Activated B cell treated with CpG ODN at 0.5 μM for 24 hours (primary cell): ENCODE measurements at regions of chr19 and their contacts with region 1.

Region 1: GRCh38 chr19:20039203-20039723 is at the start of gene ZNF682:
- DNase-seq: peak; percentile 85
- ATAC-seq: peak; percentile 100
- H3K4me3 Mint-ChIP-seq: peak within 1 kb of the TSS; percentile 98
- H3K27ac Mint-ChIP-seq: peak within 1 kb of the TSS; percentile 92
- H3K4me1 Mint-ChIP-seq: peaks cover 14% of the 10 kb centered on the region
- H3K27me3 Mint-ChIP-seq: no peaks in the 10 kb centered on the region
- CTCF ChIP-seq: no peak
- total RNA-seq, gene ZNF682: 15.5 and 19.9 TPM in 2 replicates

Region 2: GRCh38 chr19:19657397-19657783 is 381.9 kb before region 1 on chr19:
- CTCF ChIA-PET with region 1: no interaction called
- POLR2A ChIA-PET with region 1: no interaction called
- intact Hi-C with region 1: no loop called
- DNase-seq: no peak
- ATAC-seq: no peak
- H3K4me3 Mint-ChIP-seq: no peak overlapping the region
- H3K27ac Mint-ChIP-seq: no peak overlapping the region
- H3K4me1 Mint-ChIP-seq: peaks cover 19% of the 10 kb centered on the region
- H3K27me3 Mint-ChIP-seq: no peaks in the 10 kb centered on the region
- CTCF ChIP-seq: no peak

Region 3: GRCh38 chr19:19937403-19937802 is 101.9 kb before region 1 on chr19:
- CTCF ChIA-PET with region 1: no interaction called
- POLR2A ChIA-PET with region 1: no interaction called
- intact Hi-C with region 1: no loop called
- DNase-seq: no peak
- ATAC-seq: no peak
- H3K4me3 Mint-ChIP-seq: peak overlapping the region; percentile 11
- H3K27ac Mint-ChIP-seq: peak overlapping the region; percentile 46
- H3K4me1 Mint-ChIP-seq: peaks cover 18% of the 10 kb centered on the region
- H3K27me3 Mint-ChIP-seq: no peaks in the 10 kb centered on the region
- CTCF ChIP-seq: no peak

Region 4: DNA sequence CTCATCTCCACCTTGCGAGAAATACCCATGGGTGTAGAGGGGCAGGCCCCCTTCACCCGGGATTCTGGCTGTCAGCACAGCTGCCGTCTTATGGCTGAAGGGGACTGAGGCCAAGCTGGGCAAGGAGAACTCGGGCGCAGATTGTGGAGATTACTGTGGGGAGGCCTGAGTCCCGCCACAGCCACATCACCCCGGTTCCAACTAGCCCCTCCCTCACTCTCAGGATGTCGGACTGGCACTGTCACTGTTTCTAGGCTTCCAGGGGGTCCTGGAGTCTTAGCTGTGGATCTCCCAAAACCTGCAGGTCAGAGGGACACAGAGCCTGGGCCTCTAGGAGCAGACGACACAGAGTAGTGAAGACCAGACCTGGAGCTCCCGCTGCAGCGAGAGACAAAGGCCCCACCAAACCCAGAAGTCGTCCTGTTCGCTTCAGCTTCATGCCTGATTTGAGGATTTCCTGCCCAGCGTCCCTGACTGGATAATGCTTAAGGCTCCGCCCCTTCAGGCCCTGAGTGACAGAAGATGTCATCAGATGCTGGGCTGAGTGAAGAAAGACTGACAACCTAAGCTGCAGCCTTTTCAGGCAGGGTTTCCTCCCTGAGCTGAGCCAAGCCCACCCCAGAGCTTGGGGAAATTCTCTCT is 82.7 kb before region 1 on chr19:
- CTCF ChIA-PET with region 1: no interaction called
- POLR2A ChIA-PET with region 1: no interaction called
- intact Hi-C with region 1: loop called (anchors 1 kb)
- DNase-seq: no peak
- ATAC-seq: no peak
- H3K4me3 Mint-ChIP-seq: no peak overlapping the region
- H3K27ac Mint-ChIP-seq: no peak overlapping the region
- H3K4me1 Mint-ChIP-seq: peaks cover 7% of the 10 kb centered on the region
- H3K27me3 Mint-ChIP-seq: no peaks in the 10 kb centered on the region
- CTCF ChIP-seq: no peak

Region 5: DNA sequence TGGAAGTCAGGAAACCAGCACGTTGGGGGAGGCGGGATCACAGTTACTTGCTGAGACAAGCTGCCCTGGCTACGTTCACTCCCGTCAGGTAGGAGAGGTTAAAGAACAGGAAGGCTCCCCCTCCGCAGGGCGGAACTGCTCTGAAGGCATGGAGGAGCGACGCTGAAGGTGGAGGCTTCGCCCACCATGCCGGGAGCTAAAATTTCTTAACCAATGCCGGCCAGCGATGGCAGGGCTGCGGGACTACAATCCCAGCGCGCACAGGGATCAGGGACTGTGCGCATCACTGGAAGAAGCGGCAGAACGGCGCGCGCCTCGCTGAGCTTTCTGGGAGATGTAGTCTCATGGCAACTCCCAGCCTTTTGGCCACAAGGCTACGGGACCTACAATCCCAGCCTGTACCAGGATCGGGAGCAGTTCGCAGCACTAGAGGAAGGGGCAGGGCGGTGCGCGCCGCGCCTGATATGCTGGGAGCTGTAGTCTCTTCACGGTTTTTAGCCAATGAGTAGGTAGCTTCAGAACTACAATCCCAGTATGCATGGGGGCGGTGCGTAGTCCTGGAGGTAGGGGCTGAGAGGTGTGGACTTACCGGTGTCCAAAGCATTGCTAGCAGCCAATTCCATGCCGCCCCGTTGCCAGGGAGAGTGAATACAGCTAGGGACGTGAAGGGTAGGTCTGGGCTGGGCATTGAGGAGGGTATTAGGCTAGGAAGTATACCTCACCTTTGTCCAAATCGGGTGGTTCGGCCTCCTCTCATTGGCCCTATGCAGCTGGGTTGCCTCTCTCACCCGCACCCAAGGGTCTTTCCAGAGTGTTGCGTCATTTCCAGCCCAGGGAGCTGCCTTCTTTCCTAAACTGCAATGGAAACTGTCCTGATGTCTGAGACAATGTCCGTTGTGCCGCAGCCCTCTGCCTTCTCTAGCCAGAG is 12.8 kb after region 1 on chr19:
- CTCF ChIA-PET with region 1: interaction called, 7 read pairs
- POLR2A ChIA-PET with region 1: interaction called, 44 read pairs
- intact Hi-C with region 1: loop called (anchors 1 kb)
- DNase-seq: peak; percentile 55
- ATAC-seq: peak; percentile 95
- H3K4me3 Mint-ChIP-seq: peak overlapping the region; percentile 98
- H3K27ac Mint-ChIP-seq: peak overlapping the region; percentile 96
- H3K4me1 Mint-ChIP-seq: peaks cover 14% of the 10 kb centered on the region
- H3K27me3 Mint-ChIP-seq: no peaks in the 10 kb centered on the region
- CTCF ChIP-seq: no peak